ENCODE measurements at regions of chr9 and their contacts with region 1.

Region 1: GRCh38 chr9:30362373-30362772 is 2022.1 kb upstream of the ACO1 start:
- DNase-seq: no peak
- H3K4me3 ChIP-seq: no peak overlapping the region
- H3K27ac ChIP-seq: no peak overlapping the region
- H3K4me1 ChIP-seq: no peaks in the 10 kb centered on the region
- H3K27me3 ChIP-seq: no peaks in the 10 kb centered on the region
- CTCF ChIP-seq: no peak

Region 2: GRCh38 chr9:29648601-29649000 is 713.8 kb before region 1 on chr9:
- CTCF ChIA-PET with region 1: no interaction called
- POLR2A ChIA-PET with region 1: no interaction called
- intact Hi-C with region 1: no loop called
- DNase-seq: no peak
- H3K4me3 ChIP-seq: no peak overlapping the region
- H3K27ac ChIP-seq: no peak overlapping the region
- H3K4me1 ChIP-seq: no peaks in the 10 kb centered on the region
- H3K27me3 ChIP-seq: no peaks in the 10 kb centered on the region
- CTCF ChIP-seq: no peak

Region 3: DNA sequence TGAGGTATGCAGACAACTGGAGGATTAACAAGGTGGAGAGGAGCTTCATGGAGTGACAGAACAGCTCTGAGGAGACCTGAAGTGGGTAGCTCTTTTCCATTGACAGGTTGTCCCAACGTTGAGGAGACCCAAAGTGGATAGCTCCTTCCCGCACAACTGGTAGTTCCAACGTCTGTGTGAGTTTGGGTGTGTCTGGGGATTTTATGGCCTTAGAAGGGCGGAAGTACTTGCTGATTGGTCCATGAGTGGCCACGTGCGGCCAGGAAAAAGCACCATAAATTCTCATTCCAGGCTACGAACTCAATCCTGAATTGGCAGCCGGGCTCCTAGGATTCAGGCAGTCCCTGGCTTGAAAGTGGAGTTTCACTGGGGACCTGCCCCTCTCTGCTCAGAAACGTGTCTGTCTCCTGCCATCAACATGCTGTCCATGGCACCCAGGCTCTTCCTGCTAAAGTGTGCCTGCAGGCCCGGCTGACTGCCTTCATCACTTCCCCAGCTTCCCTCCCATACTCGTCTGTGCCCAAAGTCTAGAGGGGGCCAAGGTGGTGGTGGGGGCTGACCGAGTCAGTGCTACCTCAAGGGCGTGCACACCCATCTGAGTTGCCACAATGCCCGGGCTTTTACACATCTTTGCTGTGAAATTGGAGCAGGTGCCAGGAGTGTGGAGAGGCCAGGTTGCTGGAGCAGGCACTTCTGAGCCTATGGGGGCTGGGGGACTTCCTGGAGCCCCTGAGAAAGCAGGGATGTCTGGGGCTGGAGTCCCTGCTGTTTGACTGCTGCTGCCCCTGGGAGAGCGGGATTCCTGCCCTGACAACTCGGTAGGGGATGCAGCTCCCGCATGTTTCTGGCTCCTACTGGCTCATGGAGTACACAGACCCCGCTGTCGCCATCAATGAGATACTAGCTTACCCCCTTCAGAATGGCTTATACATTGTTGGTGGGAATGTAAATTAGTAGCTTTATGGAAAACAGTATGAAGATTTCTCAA is 12.6 kb before region 1 on chr9:
- CTCF ChIA-PET with region 1: no interaction called
- POLR2A ChIA-PET with region 1: no interaction called
- intact Hi-C with region 1: loop called (anchors 1 kb)
- DNase-seq: no peak
- H3K4me3 ChIP-seq: no peak overlapping the region
- H3K27ac ChIP-seq: no peak overlapping the region
- H3K4me1 ChIP-seq: no peaks in the 10 kb centered on the region
- H3K27me3 ChIP-seq: no peaks in the 10 kb centered on the region
- CTCF ChIP-seq: no peak

Region 4: DNA sequence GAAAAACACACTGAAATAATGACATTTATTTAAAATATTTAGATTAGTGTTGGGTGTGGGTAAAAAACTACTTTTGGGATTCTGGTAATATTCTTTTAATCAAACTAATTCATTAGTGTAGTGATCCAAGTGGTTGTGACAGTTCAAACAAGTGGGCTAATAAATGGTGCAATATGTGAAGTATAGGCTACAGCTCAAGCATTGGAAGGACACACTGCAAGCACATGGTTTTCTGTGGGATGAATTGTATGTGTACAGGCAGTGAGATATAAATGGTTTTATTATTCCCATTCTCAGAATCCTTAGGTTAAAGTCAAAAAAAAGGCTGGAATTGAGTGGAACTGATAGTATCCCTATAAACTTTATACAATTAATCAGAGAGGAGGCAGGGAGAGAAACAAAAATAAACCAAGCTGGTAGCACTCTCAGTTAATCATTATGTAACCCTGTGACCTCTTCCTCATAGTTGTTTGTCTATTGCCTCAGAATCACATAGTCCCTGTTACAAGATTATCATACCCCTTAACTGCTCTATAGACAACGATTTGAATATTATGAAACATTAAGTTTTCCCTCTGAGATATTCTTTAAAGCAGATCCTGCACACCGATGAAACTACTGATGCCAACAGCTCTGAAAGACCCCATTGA is 266.7 kb after region 1 on chr9:
- CTCF ChIA-PET with region 1: no interaction called
- POLR2A ChIA-PET with region 1: no interaction called
- intact Hi-C with region 1: loop called (anchors 5 kb)
- DNase-seq: no peak
- H3K4me3 ChIP-seq: no peak overlapping the region
- H3K27ac ChIP-seq: no peak overlapping the region
- H3K4me1 ChIP-seq: no peaks in the 10 kb centered on the region
- H3K27me3 ChIP-seq: no peaks in the 10 kb centered on the region
- CTCF ChIP-seq: no peak